Activated naive CD4-positive, alpha-beta T cell treated with anti-CD3 and anti-CD28 coated beads for 36 hours (primary cell): ENCODE measurements at regions of chr1 and their contacts with region 1.

Region 1: GRCh38 chr1:27864264-27864895 is 8.0 kb upstream of the THEMIS2 start:
- DNase-seq: peak; percentile 78
- H3K4me3 Mint-ChIP-seq: peak overlapping the region; percentile 43
- H3K27ac Mint-ChIP-seq: peak overlapping the region; percentile 93
- H3K4me1 Mint-ChIP-seq: peaks cover 44% of the 10 kb centered on the region
- H3K27me3 Mint-ChIP-seq: no peaks in the 10 kb centered on the region

Region 2: GRCh38 chr1:27473755-27474154 is 390.6 kb before region 1 on chr1:
- CTCF ChIA-PET with region 1: no interaction called
- intact Hi-C with region 1: no loop called
- DNase-seq: peak; percentile 45
- H3K4me3 Mint-ChIP-seq: no peak overlapping the region
- H3K27ac Mint-ChIP-seq: peak overlapping the region; percentile 8
- H3K4me1 Mint-ChIP-seq: peaks cover 84% of the 10 kb centered on the region
- H3K27me3 Mint-ChIP-seq: no peaks in the 10 kb centered on the region

Region 3: DNA sequence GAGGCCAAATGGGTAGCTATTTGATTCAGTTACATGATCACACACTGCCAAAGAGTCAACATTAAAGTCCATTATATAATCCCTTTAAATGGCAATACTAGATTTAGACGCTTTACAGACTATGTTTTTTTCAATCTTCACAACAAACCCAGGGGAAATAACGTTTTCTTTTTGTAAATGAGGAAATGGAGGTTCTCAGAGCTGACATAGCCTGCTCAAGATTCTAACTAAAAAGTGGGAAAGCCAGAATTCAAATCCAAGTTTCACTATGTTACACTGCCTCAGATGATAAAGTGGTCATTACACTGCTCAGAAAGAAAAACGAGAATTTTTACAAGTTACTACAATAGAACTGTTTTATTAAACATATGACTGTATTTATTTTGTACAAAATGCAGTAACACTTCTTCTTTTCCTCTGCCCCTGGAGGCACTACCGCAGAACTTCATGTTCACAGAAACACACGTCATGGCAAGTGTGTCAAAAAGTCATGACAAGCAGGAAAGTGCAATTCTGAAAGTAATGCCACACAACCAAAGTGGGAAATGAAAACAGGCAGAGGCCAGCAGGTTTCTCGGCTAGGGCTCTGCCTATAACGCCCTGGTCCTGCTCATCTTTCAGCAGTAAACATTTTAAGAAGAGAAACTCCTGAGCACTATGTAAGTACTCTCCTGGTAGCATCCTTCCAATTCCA is 27.0 kb after region 1 on chr1:
- CTCF ChIA-PET with region 1: interaction called, 5 read pairs
- intact Hi-C with region 1: loop called (anchors 2 kb)
- DNase-seq: peak; percentile 65
- H3K4me3 Mint-ChIP-seq: no peak overlapping the region
- H3K27ac Mint-ChIP-seq: peak overlapping the region; percentile 88
- H3K4me1 Mint-ChIP-seq: peaks cover 56% of the 10 kb centered on the region
- H3K27me3 Mint-ChIP-seq: no peaks in the 10 kb centered on the region

Region 4: DNA sequence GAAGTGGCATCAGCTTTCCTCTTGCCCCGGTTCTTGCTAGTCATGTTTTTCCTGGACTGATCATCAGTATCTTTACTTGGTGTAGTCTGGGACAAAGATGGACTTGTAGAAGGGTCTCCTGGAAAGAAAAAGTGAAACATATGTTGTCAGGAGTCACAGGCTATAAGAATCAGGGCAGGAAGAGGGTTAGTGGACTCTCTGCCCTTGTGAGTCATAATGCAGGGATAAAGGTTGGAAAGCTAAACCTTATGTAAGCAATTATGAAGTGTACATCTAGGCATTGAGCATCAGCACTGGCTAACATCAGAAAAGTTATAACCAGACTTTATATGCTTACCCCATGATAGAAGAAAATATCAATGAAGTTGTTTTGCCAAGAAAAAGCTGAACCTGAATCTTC is 146.6 kb after region 1 on chr1:
- CTCF ChIA-PET with region 1: no interaction called
- intact Hi-C with region 1: no loop called
- DNase-seq: no peak
- H3K4me3 Mint-ChIP-seq: no peak overlapping the region
- H3K27ac Mint-ChIP-seq: no peak overlapping the region
- H3K4me1 Mint-ChIP-seq: no peaks in the 10 kb centered on the region
- H3K27me3 Mint-ChIP-seq: no peaks in the 10 kb centered on the region

Region 5: DNA sequence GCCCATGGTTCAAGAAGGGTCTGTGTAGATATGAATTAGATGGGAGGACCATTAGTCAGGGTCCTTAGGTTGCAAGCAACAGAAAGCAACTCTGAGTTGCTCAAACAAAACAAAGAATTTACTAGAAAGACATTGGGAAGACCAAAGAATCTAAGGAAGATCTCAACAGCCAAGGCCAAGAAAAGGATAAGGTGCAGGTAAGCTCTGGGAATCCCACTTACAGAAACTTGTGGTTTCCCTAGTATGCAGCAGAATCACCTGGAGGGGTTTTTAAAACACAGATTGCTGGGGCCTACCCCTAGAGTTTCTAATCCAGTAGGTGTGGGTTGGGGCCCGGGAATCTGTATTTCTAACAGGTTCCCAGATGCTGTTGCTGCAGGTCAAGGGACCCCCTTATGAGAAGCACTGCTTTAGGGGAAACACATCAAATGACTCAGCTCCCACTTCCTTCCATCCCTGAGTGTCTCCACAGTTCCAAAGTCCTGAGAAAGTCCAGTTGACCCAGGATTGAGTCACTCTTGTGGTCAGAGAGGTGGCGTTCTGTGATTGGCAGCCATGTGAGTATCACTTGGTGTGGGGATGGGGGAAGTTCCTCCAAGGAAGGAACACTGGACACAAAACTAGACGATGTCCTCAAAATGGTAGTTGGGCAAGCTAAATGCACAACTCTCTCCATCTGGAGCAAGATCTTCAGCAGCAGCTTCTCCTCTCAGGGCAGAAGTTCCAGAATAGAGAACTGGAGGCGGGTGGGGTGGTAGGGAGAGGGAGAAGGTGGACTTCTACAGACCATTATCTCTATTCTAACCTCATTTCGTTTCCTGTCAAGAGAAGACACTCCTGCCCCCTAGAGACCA is 248.2 kb after region 1 on chr1:
- CTCF ChIA-PET with region 1: no interaction called
- intact Hi-C with region 1: no loop called
- DNase-seq: peak; percentile 25
- H3K4me3 Mint-ChIP-seq: no peak overlapping the region
- H3K27ac Mint-ChIP-seq: no peak overlapping the region
- H3K4me1 Mint-ChIP-seq: peaks cover 13% of the 10 kb centered on the region
- H3K27me3 Mint-ChIP-seq: no peaks in the 10 kb centered on the region